Endothelial cell of umbilical vein (primary cell): ENCODE measurements at regions of chr5 and their contacts with region 1.

Region 1: GRCh38 chr5:157476702-157477408 is 16.8 kb downstream of the NIPAL4 start:
- DNase-seq: peak; percentile 67
- H3K4me3 ChIP-seq: no peak overlapping the region
- H3K27ac ChIP-seq: no peak overlapping the region
- H3K4me1 ChIP-seq: peaks cover 6% of the 10 kb centered on the region
- H3K27me3 ChIP-seq: peaks cover 0 to 2% of the 10 kb centered on the region in 2 experiments
- CTCF ChIP-seq: peak; percentile 73 to 77
- POLR2A ChIP-seq: no peak

Region 2: DNA sequence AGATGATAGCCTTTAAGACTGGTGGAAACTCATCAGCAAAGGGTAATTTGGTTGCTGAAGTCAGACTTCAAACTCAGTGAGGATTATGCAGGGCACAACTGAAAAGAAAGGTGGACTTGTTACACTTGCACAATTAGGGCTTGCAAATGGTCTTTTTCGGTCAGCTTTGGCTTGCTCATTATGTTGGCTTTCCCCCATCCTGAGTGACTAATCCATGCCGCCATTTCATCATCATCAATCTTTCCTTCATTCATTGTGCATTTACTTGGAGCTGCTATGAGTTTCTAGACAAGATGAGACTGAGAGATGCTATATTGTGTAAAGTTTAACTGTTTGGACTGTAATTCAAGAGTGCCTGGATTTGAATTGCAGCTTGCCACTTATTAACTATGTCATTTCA is 761.6 kb before region 1 on chr5:
- CTCF ChIA-PET with region 1: no interaction called
- POLR2A ChIA-PET with region 1: no interaction called
- dilution Hi-C with region 1: no loop called
- intact Hi-C with region 1: no loop called
- DNase-seq: no peak
- H3K4me3 ChIP-seq: no peak overlapping the region
- H3K27ac ChIP-seq: no peak overlapping the region
- H3K4me1 ChIP-seq: no peaks in the 10 kb centered on the region
- H3K27me3 ChIP-seq: no peaks in the 10 kb centered on the region
- CTCF ChIP-seq: no peak
- POLR2A ChIP-seq: no peak

Region 3: DNA sequence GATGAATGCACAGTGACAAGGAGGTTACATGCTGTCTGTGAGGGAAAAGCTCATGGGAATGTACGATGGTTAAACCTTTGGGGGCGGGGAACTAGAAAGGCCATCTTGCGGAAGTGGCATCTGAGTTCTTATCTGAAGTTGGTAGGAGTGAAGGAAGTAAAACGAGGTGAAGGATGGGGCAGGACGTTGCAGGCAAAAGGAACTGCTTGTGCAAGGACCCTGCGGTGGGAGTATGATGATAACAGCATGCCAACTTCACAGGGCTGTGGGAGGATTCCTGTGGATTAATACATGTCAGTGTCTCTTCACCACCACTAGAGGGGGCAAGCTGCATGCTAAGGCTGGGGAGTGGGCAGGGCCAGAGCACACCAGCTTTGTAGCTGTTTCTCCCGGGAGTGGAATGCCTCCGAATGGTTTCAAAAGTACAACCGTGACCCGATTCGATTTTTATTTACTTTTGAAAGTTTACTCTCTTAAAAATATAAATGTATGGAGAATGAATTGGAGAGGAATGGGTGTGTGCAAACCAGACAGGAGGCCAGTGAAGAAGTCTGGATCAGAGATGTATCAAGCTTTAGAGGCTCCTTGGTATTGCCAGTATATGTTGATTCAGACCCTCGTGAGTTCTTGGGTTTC is 148.5 kb before region 1 on chr5:
- CTCF ChIA-PET with region 1: interaction called, 110 read pairs
- POLR2A ChIA-PET with region 1: no interaction called
- dilution Hi-C with region 1: loop called (anchors 25 kb)
- intact Hi-C with region 1: loop called (anchors 1 kb)
- DNase-seq: peak; percentile 71
- H3K4me3 ChIP-seq: no peak overlapping the region
- H3K27ac ChIP-seq: no peak overlapping the region
- H3K4me1 ChIP-seq: no peaks in the 10 kb centered on the region
- H3K27me3 ChIP-seq: no peaks in the 10 kb centered on the region
- CTCF ChIP-seq: peak; percentile 91 to 93
- POLR2A ChIP-seq: no peak

Region 4: DNA sequence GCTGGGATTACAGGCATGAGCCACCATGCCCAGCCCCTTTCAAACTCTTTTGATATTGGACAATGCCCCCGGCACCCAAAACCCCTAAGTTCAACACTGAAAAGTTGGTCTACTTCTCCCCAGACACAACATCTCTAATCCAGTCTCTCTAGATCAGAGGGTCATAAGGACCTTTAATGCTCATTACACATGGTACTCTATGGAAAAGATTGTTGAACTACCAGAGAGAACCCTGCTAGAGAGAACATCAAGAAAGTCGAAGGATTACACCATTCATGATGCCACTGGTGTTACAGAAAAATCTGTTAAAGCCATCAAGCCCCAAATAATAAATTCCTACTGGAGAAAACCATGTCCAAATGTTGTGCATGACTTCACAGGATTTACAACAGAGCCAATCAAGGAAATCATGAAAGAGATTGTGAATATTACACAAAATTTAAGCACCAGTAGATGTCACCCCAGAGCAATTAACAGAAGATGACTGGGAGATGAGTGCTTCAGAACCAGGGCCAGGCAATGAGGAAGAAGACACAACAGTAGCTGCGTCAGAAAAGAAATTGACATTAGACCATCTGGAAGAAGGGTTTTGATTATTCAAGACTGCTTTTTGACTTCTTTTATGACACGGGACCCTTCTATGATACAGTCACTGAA is 45.2 kb before region 1 on chr5:
- CTCF ChIA-PET with region 1: interaction called, 34 read pairs
- POLR2A ChIA-PET with region 1: no interaction called
- dilution Hi-C with region 1: no loop called
- intact Hi-C with region 1: loop called (anchors 2 kb)
- DNase-seq: peak; percentile 64
- H3K4me3 ChIP-seq: no peak overlapping the region
- H3K27ac ChIP-seq: no peak overlapping the region
- H3K4me1 ChIP-seq: no peaks in the 10 kb centered on the region
- H3K27me3 ChIP-seq: no peaks in the 10 kb centered on the region
- CTCF ChIP-seq: peak; percentile 16 to 20
- POLR2A ChIP-seq: no peak